ENCODE measurements at regions of chr10 and their contacts with region 1.

Region 1: DNA sequence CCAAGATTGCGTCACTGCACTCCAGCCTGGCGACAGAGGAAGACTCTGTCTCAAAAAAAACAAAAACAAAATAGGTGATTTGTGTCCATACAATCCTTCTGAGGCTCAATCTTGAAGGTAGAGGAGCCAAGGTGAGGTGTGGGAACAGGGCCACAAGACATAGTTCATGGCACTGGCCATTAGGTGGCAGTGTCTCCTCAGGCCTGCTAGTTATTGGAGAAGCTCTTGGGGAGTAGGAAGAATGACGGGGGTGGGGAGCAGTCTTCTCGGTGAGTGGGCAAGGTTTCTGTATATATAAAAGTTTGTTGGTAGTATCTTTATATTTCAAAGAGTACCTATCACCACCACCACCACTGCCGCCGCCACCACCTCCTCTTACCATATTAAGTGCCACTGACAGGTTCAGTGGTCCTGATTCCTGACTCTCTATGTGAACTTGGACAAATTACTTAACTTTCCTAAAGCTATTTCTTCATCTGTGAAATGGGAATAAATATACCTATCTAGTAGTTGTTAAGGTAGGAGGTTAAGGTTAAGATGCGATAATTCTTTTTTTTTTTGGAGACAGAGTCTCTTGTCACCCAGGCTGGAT is 24.0 kb downstream of the CCSER2 start:
- DNase-seq: peak; percentile 45 to 84 (median 62)
- ATAC-seq: peak; percentile 90
- H3K4me3 ChIP-seq: no peak overlapping the region
- H3K4me3 Mint-ChIP-seq: no peak overlapping the region
- H3K27ac ChIP-seq: no peak overlapping the region
- H3K27ac Mint-ChIP-seq: peak overlapping the region; percentile 30
- H3K4me1 ChIP-seq: peaks cover 30% of the 10 kb centered on the region
- H3K4me1 Mint-ChIP-seq: peaks cover 81% of the 10 kb centered on the region
- H3K27me3 ChIP-seq: no peaks in the 10 kb centered on the region
- H3K27me3 Mint-ChIP-seq: no peaks in the 10 kb centered on the region
- CTCF ChIP-seq: peak; percentile 70

Region 2: DNA sequence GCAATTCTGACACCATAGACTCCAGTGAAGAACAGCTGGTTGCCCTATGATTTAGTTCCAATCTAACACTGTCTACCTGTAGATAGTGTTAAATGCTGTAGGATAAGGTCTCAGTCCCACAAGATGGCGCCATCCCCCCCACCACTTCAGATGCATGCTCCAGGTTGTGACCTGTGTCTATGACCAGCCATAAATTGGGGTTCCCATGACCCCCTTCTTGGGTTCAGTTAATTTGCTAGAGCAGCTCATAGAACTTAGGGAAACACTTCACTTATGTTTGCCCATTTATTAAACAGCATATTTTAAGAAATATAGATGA is 10.8 kb before region 1 on chr10:
- CTCF ChIA-PET with region 1: interaction called, 44 read pairs
- POLR2A ChIA-PET with region 1: interaction called, 3 read pairs
- intact Hi-C with region 1: no loop called
- DNase-seq: peak in 1 of 14 experiments; percentile 38
- ATAC-seq: peak; percentile 43
- H3K4me3 ChIP-seq: no peak overlapping the region
- H3K4me3 Mint-ChIP-seq: peak overlapping the region; percentile 30
- H3K27ac ChIP-seq: no peak overlapping the region
- H3K27ac Mint-ChIP-seq: no peak overlapping the region
- H3K4me1 ChIP-seq: peaks cover 37% of the 10 kb centered on the region
- H3K4me1 Mint-ChIP-seq: peaks cover 62% of the 10 kb centered on the region
- H3K27me3 ChIP-seq: no peaks in the 10 kb centered on the region
- H3K27me3 Mint-ChIP-seq: no peaks in the 10 kb centered on the region
- CTCF ChIP-seq: no peak

Measured in CD4-positive, alpha-beta T cell (primary cell).